ENCODE measurements at regions of chr5 and their contacts with region 1.

Region 1: GRCh38 chr5:41843456-41844370 is 26.5 kb downstream of the OXCT1 start:
- DNase-seq: no peak
- H3K4me3 ChIP-seq: no peak overlapping the region
- H3K27ac ChIP-seq: no peak overlapping the region
- H3K4me1 ChIP-seq: peaks cover 0 to 3% (median 0%) of the 10 kb centered on the region in 6 donors
- H3K27me3 ChIP-seq: no peaks in the 10 kb centered on the region
- CTCF ChIP-seq: peak; percentile 22 to 75 (median 67)
- POLR2A ChIP-seq: no peak

Region 2: GRCh38 chr5:40904205-40904993 is 939.3 kb before region 1 on chr5:
- intact Hi-C with region 1: loop called (anchors 5 kb)
- DNase-seq: no peak
- H3K4me3 ChIP-seq: no peak overlapping the region
- H3K27ac ChIP-seq: peak overlapping the region; percentile 13 to 66 (median 43)
- H3K4me1 ChIP-seq: peaks cover 3 to 19% (median 15%) of the 10 kb centered on the region in 6 donors
- H3K27me3 ChIP-seq: no peaks in the 10 kb centered on the region
- CTCF ChIP-seq: peak; percentile 19 to 73 (median 63)
- POLR2A ChIP-seq: no peak

Region 3: GRCh38 chr5:41270423-41271251 is 573.1 kb before region 1 on chr5:
- intact Hi-C with region 1: loop called (anchors 10 kb)
- DNase-seq: no peak
- H3K4me3 ChIP-seq: no peak overlapping the region
- H3K27ac ChIP-seq: no peak overlapping the region
- H3K4me1 ChIP-seq: peaks cover 0 to 3% (median 0%) of the 10 kb centered on the region in 6 donors
- H3K27me3 ChIP-seq: no peaks in the 10 kb centered on the region
- CTCF ChIP-seq: peak in 10 of 11 experiments; percentile 13 to 66 (median 56)
- POLR2A ChIP-seq: no peak

Region 4: DNA sequence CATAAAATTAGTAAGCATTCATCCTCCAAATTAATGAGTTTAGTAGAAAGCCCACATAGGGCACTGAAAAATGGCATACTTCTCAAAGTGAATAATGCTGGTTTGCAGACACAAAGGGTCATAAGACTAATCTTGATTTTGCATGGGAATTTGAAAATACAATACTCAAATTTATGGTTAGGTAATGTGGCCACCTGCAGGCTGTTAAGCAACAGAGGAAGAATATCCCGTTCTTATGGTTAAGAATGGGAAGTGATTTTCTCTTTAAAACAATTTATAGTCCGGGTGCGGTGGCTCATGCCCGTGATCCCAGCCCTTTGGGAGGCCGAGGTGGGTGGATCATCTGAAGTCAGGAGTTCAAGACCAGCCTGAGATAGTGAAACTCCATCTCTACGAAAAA is 323.9 kb before region 1 on chr5:
- intact Hi-C with region 1: no loop called
- DNase-seq: no peak
- H3K4me3 ChIP-seq: no peak overlapping the region
- H3K27ac ChIP-seq: no peak overlapping the region
- H3K4me1 ChIP-seq: no peaks in the 10 kb centered on the region
- H3K27me3 ChIP-seq: no peaks in the 10 kb centered on the region
- CTCF ChIP-seq: no peak
- POLR2A ChIP-seq: no peak

Region 5: DNA sequence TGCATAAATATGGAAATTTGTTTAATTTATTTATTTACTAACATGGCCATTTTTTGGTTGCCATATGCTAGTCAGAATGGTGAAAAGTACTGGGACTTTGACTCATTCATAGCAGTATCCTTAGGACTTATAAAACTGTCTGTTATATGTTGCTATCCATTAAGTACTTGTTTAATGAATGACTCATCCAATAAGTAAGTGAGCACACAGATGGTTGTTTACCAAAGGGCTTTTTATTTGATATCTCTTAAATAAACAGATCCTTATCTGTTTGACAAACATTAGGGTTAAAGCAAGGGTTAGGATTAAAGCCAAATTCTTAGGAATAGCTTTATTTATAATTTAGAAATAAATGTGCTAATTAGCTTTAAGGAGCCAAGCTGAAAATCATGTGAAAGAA is 264.8 kb after region 1 on chr5:
- intact Hi-C with region 1: no loop called
- DNase-seq: no peak
- H3K4me3 ChIP-seq: no peak overlapping the region
- H3K27ac ChIP-seq: no peak overlapping the region
- H3K4me1 ChIP-seq: no peaks in the 10 kb centered on the region
- H3K27me3 ChIP-seq: no peaks in the 10 kb centered on the region
- CTCF ChIP-seq: no peak
- POLR2A ChIP-seq: no peak

Measured in spleen (tissue), 13 donors.